ENCODE measurements at regions of chr5 and their contacts with region 1.

Region 1: GRCh38 chr5:94361161-94361560 is 257.2 kb downstream of the KIAA0825 start:
- DNase-seq: no peak
- ATAC-seq: no peak
- H3K4me3 ChIP-seq: no peak overlapping the region
- H3K27ac ChIP-seq: no peak overlapping the region
- H3K4me1 ChIP-seq: no peaks in the 10 kb centered on the region
- H3K27me3 ChIP-seq: peaks cover 3% of the 10 kb centered on the region; the same call in 1 of the 2 replicates
- CTCF ChIP-seq: no peak

Region 2: GRCh38 chr5:94192658-94193391 is 168.3 kb before region 1 on chr5:
- CTCF ChIA-PET with region 1: no interaction called
- POLR2A ChIA-PET with region 1: no interaction called
- in situ Hi-C with region 1: no loop called
- intact Hi-C with region 1: no loop called
- DNase-seq: no peak
- ATAC-seq: no peak
- H3K4me3 ChIP-seq: no peak overlapping the region
- H3K27ac ChIP-seq: no peak overlapping the region
- H3K4me1 ChIP-seq: no peaks in the 10 kb centered on the region
- H3K27me3 ChIP-seq: no peaks in the 10 kb centered on the region
- CTCF ChIP-seq: no peak

Region 3: GRCh38 chr5:94376672-94377345 is 15.6 kb after region 1 on chr5:
- CTCF ChIA-PET with region 1: no interaction called
- POLR2A ChIA-PET with region 1: no interaction called
- in situ Hi-C with region 1: no loop called
- intact Hi-C with region 1: no loop called
- DNase-seq: no peak
- ATAC-seq: no peak
- H3K4me3 ChIP-seq: no peak overlapping the region
- H3K27ac ChIP-seq: no peak overlapping the region
- H3K4me1 ChIP-seq: no peaks in the 10 kb centered on the region
- H3K27me3 ChIP-seq: no peaks in the 10 kb centered on the region
- CTCF ChIP-seq: no peak

Region 4: DNA sequence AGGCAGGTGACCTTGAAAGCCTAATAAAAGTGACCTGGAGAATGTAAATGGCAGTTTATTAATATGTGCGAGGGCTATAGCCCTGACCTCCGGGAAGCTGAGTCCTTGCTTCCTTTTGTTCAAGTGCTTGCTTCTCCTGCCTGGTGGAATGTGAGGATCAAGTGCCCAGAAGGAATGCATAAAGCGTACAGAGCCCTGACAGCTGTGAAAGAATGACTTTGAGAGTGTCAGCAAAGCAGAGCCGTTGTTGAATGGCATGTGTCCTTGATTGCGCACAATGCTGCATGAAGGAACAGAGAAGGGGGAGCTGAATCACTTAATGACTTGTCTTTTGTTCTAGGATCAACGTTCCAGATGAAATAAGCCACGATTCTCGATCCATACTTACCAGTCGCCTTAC is 390.3 kb after region 1 on chr5:
- CTCF ChIA-PET with region 1: no interaction called
- POLR2A ChIA-PET with region 1: no interaction called
- in situ Hi-C with region 1: no loop called
- intact Hi-C with region 1: loop called (anchors 5 kb)
- DNase-seq: no peak
- ATAC-seq: no peak
- H3K4me3 ChIP-seq: no peak overlapping the region
- H3K27ac ChIP-seq: no peak overlapping the region
- H3K4me1 ChIP-seq: no peaks in the 10 kb centered on the region
- H3K27me3 ChIP-seq: no peaks in the 10 kb centered on the region
- CTCF ChIP-seq: no peak

Measured in Panc1 (cell line).